Activated CD4-positive, alpha-beta T cell treated with anti-CD3 and anti-CD28 coated beads for 36 hours (primary cell): ENCODE measurements at regions of chr19 and their contacts with region 1.

Region 1: GRCh38 chr19:12139885-12140547 is at the start of gene ZNF20:
- DNase-seq: peak; percentile 95
- ATAC-seq: peak; percentile 93
- H3K4me3 Mint-ChIP-seq: peak within 1 kb of the TSS; percentile 91
- H3K27ac Mint-ChIP-seq: peak within 1 kb of the TSS; percentile 73
- H3K4me1 Mint-ChIP-seq: peaks cover 32% of the 10 kb centered on the region
- H3K27me3 Mint-ChIP-seq: no peaks in the 10 kb centered on the region
- total RNA-seq, gene ZNF20: 3.2 to 3.3 TPM

Region 2: DNA sequence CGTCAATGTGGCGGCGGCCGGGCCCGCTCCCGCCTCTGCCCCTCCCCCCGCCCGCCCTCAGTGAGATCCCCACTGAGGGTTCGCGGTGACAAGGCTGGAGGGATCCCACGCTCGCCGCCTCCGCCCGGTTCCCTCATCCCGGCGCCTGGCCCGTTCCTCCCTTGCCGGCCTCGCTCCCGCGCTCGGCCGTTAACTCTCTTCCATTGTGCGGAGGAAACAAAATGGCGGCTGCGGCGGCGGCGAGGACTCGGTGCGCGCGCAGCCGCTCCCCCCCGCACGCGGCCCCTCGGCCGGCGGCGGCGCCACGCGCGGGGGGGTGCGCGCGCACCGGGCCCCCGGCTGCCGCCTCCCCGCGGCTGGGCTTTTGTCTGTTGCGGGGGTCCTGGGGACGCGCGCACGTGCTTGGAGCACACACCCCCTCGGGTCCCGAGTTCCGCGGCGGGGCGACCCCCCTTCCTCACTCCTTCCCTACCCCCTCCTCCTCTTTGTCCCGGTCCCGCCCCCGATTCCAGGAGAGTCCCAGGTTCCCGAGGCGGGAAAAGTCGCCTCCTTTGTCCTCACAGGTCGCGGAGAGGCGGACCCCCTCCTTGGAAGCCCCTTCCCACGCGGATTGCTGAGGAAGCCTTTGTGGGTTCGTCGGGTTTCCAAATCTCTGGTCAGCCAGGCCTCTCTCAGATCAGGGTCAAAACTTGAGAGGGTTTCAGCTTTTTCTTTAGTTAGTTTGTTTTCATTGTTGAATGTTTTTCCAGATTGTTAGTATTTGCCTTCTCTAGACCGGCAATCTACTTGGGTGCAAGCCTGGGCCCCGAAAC is 1485.3 kb before region 1 on chr19:
- CTCF ChIA-PET with region 1: no interaction called
- POLR2A ChIA-PET with region 1: no interaction called
- intact Hi-C with region 1: no loop called
- DNase-seq: peak; percentile 78
- ATAC-seq: peak; percentile 20
- H3K4me3 Mint-ChIP-seq: peak overlapping the region; percentile 86
- H3K27ac Mint-ChIP-seq: peak overlapping the region; percentile 97
- H3K4me1 Mint-ChIP-seq: peaks cover 39% of the 10 kb centered on the region
- H3K27me3 Mint-ChIP-seq: no peaks in the 10 kb centered on the region

Region 3: GRCh38 chr19:11881151-11881800 is 258.7 kb before region 1 on chr19:
- CTCF ChIA-PET with region 1: interaction called, 4 read pairs
- POLR2A ChIA-PET with region 1: no interaction called
- intact Hi-C with region 1: loop called (anchors 1 kb)
- DNase-seq: peak; percentile 75
- ATAC-seq: peak; percentile 77
- H3K4me3 Mint-ChIP-seq: no peak overlapping the region
- H3K27ac Mint-ChIP-seq: no peak overlapping the region
- H3K4me1 Mint-ChIP-seq: no peaks in the 10 kb centered on the region
- H3K27me3 Mint-ChIP-seq: no peaks in the 10 kb centered on the region

Region 4: DNA sequence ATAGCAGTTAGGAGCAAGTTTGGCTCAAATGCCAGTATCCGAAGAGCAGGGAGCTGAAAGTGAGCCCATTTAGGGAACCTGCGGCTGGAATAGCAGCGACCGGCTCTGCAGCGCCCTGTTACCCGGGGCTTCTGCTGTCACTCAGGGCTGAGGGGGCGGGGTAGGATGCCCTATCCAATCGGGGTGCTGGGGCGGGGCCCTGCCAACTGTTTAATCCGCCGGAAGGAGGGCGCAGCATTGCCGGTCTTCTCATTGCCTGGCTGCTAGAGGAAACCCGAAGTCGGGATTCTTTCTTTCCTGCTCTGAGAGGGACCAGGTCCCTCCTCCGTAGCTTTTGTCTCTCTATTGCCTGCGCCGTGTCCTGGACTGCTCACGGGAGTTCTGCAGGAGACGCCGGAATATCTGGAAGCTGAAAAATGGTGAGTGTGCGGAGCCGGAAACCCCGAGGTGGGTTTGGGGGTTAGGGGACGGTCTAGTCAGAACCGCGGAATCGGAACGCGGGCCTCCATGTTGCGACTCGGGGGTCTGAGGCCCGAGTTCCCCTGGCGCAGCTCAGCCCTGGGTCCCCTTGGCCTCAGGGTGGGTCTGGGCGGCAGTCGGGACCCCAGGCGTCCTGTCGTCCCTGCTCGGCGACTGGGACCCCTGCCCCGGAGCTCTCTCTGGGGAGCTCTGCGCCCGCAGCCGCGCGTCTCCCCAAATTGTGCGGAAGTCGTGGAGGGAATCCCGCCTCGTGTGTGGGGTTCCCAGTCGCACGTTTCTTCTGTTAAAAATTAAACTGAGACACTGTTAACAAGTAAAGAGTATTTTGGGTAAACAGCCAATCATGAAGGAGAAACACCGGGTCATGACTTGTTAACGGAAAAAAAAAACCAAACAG is 152.4 kb before region 1 on chr19:
- CTCF ChIA-PET with region 1: interaction called, 9 read pairs
- POLR2A ChIA-PET with region 1: interaction called, 3 read pairs
- intact Hi-C with region 1: loop called in 1 of 2 experiments (anchors 1 kb)
- DNase-seq: peak; percentile 98
- ATAC-seq: peak; percentile 98
- H3K4me3 Mint-ChIP-seq: peak overlapping the region; percentile 86
- H3K27ac Mint-ChIP-seq: peak overlapping the region; percentile 92
- H3K4me1 Mint-ChIP-seq: peaks cover 18% of the 10 kb centered on the region
- H3K27me3 Mint-ChIP-seq: no peaks in the 10 kb centered on the region

Region 5: DNA sequence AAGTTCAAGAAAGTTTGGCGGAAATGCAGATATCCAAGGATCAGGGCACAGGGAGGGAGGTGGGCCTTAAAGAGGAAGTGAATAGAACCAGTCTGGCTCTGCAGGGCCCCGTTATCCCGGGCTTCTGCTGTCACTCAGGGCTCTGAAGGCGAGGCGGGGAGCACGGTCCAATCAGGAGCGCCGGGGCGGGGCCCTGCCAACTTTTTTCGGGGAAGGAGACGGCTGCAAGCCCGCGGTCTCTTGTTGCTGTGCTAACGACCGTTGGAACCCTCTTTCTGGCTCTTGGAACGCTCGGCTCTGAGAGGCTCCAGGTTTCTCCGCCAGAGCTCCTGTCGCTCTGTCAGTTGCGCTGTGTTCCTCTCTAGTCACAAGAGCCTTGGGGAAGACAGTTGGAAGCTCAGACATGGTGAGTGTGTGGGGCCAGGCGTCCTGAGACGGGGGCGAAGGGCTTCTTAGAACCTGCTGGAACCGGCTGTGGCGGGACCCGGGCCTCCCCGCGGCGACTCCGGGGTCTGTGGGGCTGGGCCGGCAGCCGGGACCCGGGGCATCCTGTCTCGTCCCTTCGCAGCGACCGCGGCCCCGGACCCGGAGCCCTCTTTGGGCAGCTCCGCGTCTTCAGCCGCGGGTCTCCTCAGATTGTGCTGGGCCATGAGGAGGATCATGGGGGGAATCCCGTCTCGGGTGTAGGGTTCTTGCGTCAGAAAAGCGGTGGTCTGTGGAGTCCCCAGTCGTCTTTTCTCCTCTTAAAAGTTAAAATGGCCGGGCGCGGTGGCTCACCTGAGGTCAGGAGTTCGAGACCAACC is 47.8 kb before region 1 on chr19:
- CTCF ChIA-PET with region 1: interaction called, 50 read pairs
- POLR2A ChIA-PET with region 1: interaction called, 7 read pairs
- intact Hi-C with region 1: loop called (anchors 1 kb)
- DNase-seq: peak; percentile 90
- ATAC-seq: peak; percentile 92
- H3K4me3 Mint-ChIP-seq: peak overlapping the region; percentile 80
- H3K27ac Mint-ChIP-seq: peak overlapping the region; percentile 69
- H3K4me1 Mint-ChIP-seq: peaks cover 10% of the 10 kb centered on the region
- H3K27me3 Mint-ChIP-seq: peaks cover 6% of the 10 kb centered on the region

Region 6: DNA sequence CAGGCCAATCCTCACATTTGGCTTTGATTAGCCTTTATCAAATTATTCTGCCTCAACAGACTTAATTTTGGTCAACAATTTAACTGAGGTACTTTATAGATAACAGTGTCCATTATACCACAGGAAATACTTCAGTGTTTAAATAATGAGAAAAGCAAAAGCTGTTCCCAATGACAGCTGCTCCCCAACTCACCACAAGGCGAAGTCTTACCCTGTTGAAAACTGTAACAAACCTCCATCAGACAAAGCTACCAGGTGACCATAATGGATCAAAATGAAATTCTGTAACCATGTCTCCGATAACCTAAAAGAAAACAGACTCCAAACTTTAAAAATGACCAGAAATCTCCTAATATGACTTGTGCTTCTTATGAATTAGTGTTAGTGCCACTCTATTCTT is 104.4 kb after region 1 on chr19:
- CTCF ChIA-PET with region 1: no interaction called
- POLR2A ChIA-PET with region 1: no interaction called
- intact Hi-C with region 1: no loop called
- DNase-seq: no peak
- ATAC-seq: no peak
- H3K4me3 Mint-ChIP-seq: no peak overlapping the region
- H3K27ac Mint-ChIP-seq: no peak overlapping the region
- H3K4me1 Mint-ChIP-seq: no peaks in the 10 kb centered on the region
- H3K27me3 Mint-ChIP-seq: no peaks in the 10 kb centered on the region